ENCODE measurements at regions of chr3 and their contacts with region 1.

Region 1: GRCh38 chr3:51819709-51820406 is 40.8 kb upstream of the IQCF6 start:
- DNase-seq: peak; percentile 82
- ATAC-seq: peak; percentile 99
- H3K4me3 Mint-ChIP-seq: no peak overlapping the region
- H3K27ac Mint-ChIP-seq: no peak overlapping the region
- H3K4me1 Mint-ChIP-seq: 0 out of 2 replicates have a peak, but pooled peaks cover 4% of the 10 kb centered on the region
- H3K27me3 Mint-ChIP-seq: peaks cover 13% of the 10 kb centered on the region
- CTCF ChIP-seq: peak; percentile 76

Region 2: DNA sequence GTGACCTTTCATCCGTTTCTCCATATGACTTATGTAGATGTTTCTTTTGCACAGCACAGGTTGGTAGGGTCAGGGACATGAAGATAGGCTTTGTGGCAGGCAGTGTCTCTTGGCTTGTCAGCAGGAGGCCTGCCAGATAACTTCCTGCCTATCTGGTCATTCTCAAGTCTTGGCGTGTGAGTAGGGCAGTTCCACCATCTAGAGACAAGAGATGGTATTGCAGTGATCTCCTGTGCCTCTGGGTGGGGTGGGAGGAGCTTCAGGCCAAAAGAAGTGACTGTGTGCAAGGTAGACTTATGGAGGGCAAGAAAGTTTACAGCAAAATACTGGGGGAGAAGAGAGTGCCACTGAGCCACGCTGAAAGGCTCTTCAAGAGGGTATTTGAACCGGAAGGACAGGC is 137.8 kb before region 1 on chr3:
- CTCF ChIA-PET with region 1: interaction called, 11 read pairs
- POLR2A ChIA-PET with region 1: no interaction called
- DNase-seq: peak; percentile 72
- ATAC-seq: peak; percentile 91
- H3K4me3 Mint-ChIP-seq: no peak overlapping the region
- H3K27ac Mint-ChIP-seq: peak overlapping the region; percentile 72; the same call in 1 of the 2 replicates
- H3K4me1 Mint-ChIP-seq: peaks cover 18% of the 10 kb centered on the region
- H3K27me3 Mint-ChIP-seq: no peaks in the 10 kb centered on the region
- CTCF ChIP-seq: peak; percentile 70

Region 3: DNA sequence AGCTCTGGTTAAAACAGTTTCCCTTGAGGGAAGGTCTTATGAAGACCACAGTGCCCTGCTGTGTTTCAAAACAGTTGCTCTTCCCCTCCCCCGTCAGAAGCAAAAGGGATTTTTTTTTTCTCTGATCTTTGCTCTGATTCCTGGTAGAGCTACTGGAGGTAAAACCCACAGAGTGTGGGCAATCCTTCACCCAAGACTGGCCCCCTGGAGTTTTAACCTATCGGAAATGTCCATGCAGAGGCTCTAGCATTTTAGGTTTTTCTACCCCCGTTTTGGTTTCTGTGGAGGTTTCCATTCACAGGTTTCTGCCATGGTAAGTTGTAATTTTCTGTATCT is 85.3 kb before region 1 on chr3:
- CTCF ChIA-PET with region 1: no interaction called
- POLR2A ChIA-PET with region 1: no interaction called
- DNase-seq: no peak
- ATAC-seq: peak; percentile 38
- H3K4me3 Mint-ChIP-seq: no peak overlapping the region
- H3K27ac Mint-ChIP-seq: no peak overlapping the region
- H3K4me1 Mint-ChIP-seq: peaks cover 25% of the 10 kb centered on the region
- H3K27me3 Mint-ChIP-seq: peaks cover 8% of the 10 kb centered on the region
- CTCF ChIP-seq: no peak

Region 4: DNA sequence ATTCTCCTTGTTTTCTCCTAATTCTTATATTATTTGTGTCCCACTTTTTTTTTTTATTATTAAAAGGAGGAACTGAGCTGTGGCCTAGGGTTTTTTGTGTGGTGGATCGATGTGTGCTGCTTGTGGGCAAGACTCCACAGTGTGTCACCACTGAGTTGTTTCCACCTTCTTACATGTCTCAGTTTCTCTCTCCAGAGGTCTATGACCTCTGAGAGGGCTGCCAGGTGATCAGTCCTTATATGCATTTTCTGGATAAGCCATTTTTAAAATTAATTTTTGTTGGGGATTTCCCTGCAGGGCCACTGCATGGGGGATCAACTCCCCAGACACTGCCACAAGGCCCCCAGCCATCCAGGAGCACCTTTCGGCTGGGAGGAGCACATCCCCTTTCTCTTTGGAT is 68.6 kb before region 1 on chr3:
- CTCF ChIA-PET with region 1: interaction called, 10 read pairs
- POLR2A ChIA-PET with region 1: no interaction called
- DNase-seq: no peak
- ATAC-seq: no peak
- H3K4me3 Mint-ChIP-seq: no peak overlapping the region
- H3K27ac Mint-ChIP-seq: no peak overlapping the region
- H3K4me1 Mint-ChIP-seq: peaks cover 24% of the 10 kb centered on the region
- H3K27me3 Mint-ChIP-seq: peaks cover 4% of the 10 kb centered on the region
- CTCF ChIP-seq: no peak

Region 5: GRCh38 chr3:51794197-51794596 is 25.7 kb before region 1 on chr3:
- CTCF ChIA-PET with region 1: interaction called, 60 read pairs
- POLR2A ChIA-PET with region 1: no interaction called
- DNase-seq: peak; percentile 46
- ATAC-seq: peak; percentile 93
- H3K4me3 Mint-ChIP-seq: no peak overlapping the region; the same call in 1 of the 2 replicates
- H3K27ac Mint-ChIP-seq: no peak overlapping the region
- H3K4me1 Mint-ChIP-seq: peaks cover 65% of the 10 kb centered on the region
- H3K27me3 Mint-ChIP-seq: no peaks in the 10 kb centered on the region
- CTCF ChIP-seq: no peak

Region 6: GRCh38 chr3:51845129-51845528 is 25.3 kb after region 1 on chr3:
- CTCF ChIA-PET with region 1: interaction called, 20 read pairs
- POLR2A ChIA-PET with region 1: no interaction called
- DNase-seq: peak; percentile 23
- ATAC-seq: peak; percentile 90
- H3K4me3 Mint-ChIP-seq: no peak overlapping the region
- H3K27ac Mint-ChIP-seq: peak overlapping the region; percentile 64
- H3K4me1 Mint-ChIP-seq: peaks cover 15% of the 10 kb centered on the region
- H3K27me3 Mint-ChIP-seq: no peaks in the 10 kb centered on the region
- CTCF ChIP-seq: no peak

Region 7: DNA sequence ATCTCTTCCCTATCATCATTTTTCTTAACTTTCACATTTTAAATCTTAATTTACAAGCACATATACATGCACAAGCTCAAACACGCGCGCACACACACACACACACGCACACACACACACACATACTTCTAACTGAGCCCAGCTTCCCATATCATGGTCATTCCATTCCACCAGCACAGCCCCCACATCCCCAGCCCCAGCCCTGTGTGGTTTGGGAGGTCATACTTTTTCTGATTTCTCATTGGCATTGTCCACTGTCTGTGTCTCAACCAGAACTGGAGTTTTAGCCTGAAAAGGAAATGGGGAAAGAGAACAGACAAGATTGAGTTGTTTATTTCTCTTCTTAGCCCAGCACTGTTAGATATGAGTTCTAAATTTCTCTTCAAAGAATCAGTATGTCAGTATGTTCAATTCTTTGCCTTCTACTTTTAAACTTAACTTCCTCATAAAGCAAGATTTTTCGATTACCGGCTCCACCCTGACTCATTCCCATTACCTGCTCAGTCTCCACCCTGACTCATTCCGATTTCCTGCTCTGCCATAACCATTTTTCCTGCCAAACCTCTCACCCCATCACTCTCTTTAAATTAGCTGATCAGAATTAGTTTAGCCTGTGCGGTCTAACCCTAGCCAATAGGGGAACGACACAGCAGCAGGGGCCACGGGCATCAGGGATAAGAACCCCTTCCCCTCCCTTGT is 76.9 kb after region 1 on chr3:
- CTCF ChIA-PET with region 1: interaction called, 12 read pairs
- POLR2A ChIA-PET with region 1: no interaction called
- DNase-seq: no peak
- ATAC-seq: no peak
- H3K4me3 Mint-ChIP-seq: no peak overlapping the region
- H3K27ac Mint-ChIP-seq: no peak overlapping the region
- H3K4me1 Mint-ChIP-seq: peaks cover 14% of the 10 kb centered on the region
- H3K27me3 Mint-ChIP-seq: peaks cover 5% of the 10 kb centered on the region
- CTCF ChIP-seq: no peak

Measured in WTC11 (cell line).